MCF 10A (cell line): ENCODE measurements at regions of chr2 and their contacts with region 1.

Region 1: DNA sequence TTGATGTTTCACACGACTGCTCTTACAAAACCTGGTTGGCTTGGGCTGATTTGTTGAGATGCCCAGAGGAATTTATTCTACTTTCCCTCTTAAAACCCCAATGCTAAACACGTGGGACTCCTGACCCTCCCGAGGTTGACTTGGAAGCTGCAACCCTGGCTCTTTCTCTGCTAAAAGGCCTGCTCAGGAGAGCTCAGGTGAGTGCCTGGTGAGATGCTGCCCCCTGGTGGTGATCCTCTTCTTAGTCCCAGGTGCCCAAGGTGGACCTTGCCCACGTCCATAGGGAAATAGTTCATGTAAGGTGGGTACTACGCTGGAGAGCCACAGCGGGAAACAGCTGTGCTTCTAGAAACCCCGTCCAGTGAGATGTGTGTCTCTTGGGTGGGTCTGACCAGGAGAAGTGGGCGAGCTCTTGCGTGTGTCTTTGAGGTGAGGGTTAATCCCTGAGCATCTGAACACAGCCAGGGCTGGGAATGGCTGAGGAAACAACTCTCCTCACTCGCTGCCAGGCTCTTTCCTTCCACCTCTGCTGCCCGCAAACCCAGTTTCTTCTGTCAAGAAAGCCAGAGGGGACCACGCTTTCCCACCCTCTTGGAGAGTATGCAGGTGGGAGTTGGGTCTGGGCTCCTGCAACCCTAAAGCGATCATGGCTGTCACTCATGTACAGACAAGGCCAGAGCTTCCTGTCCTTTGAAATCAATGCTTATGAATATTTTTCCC is 25.5 kb upstream of the PXDN start:
- DNase-seq: peak; percentile 81
- H3K4me3 Mint-ChIP-seq: no peak overlapping the region
- H3K27ac Mint-ChIP-seq: no peak overlapping the region
- H3K4me1 Mint-ChIP-seq: no peaks in the 10 kb centered on the region
- H3K27me3 Mint-ChIP-seq: no peaks in the 10 kb centered on the region
- CTCF ChIP-seq: peak; percentile 93

Region 2: GRCh38 chr2:529425-529824 is 1240.4 kb before region 1 on chr2:
- CTCF ChIA-PET with region 1: interaction called, 3 read pairs
- POLR2A ChIA-PET with region 1: no interaction called
- intact Hi-C with region 1: loop called (anchors 10 kb)
- DNase-seq: peak; percentile 50
- H3K4me3 Mint-ChIP-seq: no peak overlapping the region
- H3K27ac Mint-ChIP-seq: no peak overlapping the region
- H3K4me1 Mint-ChIP-seq: peaks cover 3% of the 10 kb centered on the region
- H3K27me3 Mint-ChIP-seq: no peaks in the 10 kb centered on the region
- CTCF ChIP-seq: peak; percentile 50

Region 3: DNA sequence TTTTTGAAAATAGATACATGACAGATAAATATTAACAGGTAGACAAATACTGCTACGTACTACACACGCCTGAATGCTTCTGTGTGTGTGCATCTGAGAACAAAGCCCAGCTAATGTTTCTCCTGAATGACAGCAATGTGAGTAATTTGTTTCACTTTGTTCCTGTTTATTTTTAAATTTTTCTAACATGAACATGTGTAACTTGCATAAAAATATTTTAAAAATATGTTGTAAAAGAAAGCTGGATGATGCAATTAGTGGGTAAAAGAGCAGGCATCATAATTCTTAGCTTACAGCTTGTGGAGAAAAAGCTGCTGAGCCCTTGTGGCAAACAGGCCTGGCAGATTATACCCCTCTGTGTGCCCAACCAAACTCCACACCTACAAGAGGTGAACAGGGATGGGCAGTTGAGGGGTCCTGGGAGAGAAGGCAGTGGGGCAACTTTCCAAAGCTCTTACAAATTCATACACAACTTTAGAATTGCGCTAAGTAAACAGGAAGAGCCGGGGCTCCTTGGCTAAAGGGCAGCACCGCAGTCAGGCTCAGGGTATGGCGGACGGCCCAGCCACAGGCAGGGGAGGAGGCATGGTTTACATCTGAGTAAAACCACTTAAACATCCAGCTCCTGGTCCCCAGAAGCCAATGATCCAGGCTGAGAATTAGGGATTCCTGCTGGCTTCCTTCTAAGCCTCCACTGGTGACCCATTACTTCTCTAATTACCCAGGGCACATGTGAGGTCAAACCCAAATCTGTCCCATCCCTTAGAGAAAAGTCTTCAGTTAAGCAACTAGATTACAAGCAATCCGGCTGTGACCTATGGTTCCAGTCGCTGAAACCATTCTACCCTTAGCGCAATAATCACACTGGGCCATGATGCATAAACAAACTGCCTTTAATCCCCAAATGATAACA is 39.6 kb before region 1 on chr2:
- CTCF ChIA-PET with region 1: interaction called, 12 read pairs
- POLR2A ChIA-PET with region 1: no interaction called
- intact Hi-C with region 1: no loop called
- DNase-seq: peak; percentile 70
- H3K4me3 Mint-ChIP-seq: peak overlapping the region; percentile 53
- H3K27ac Mint-ChIP-seq: peak overlapping the region; percentile 99
- H3K4me1 Mint-ChIP-seq: peaks cover 32% of the 10 kb centered on the region
- H3K27me3 Mint-ChIP-seq: no peaks in the 10 kb centered on the region
- CTCF ChIP-seq: no peak

Region 4: DNA sequence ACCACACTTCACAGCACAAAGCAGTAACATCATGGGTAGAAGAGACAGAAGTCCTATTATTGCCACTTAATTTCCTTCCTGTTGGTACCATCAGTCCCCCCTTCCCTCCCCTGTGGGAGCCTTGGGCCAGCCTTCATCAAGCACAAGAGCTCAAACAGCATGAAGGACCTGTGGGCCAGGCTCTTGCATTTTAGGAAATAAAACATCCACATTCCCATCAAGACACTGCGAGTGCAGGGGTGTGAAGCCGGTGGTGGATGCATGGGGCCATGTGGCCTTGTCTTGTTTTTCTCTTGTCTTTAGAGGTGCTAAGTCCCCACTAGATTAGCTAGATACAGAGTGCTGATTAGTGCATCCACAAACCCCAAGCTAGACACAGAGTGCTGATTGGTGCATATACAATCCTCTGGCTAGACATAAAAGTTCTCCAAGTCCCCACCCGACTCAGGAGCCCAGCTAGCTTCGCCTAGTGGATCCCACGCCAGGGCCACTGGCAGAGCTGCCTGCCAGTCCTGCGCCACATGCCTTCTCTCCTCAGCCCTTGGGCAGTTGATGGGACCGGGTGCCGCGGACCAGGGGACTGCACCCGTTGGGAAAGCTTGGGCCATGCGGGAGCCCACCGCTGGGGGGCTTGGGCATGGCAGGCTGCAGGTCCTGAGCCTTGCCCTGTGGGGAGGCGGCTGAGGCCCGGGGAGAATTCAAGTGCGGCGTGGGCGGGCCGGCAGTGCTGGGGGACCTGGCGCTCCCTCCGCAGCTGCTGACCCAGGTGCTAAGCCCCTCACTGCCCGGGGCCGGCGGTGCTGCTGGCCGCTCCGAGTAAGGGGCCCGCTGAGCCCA is 10.9 kb before region 1 on chr2:
- CTCF ChIA-PET with region 1: interaction called, 63 read pairs
- POLR2A ChIA-PET with region 1: interaction called, 4 read pairs
- intact Hi-C with region 1: no loop called
- DNase-seq: no peak
- H3K4me3 Mint-ChIP-seq: no peak overlapping the region
- H3K27ac Mint-ChIP-seq: no peak overlapping the region
- H3K4me1 Mint-ChIP-seq: no peaks in the 10 kb centered on the region
- H3K27me3 Mint-ChIP-seq: peaks cover 28% of the 10 kb centered on the region
- CTCF ChIP-seq: no peak

Region 5: DNA sequence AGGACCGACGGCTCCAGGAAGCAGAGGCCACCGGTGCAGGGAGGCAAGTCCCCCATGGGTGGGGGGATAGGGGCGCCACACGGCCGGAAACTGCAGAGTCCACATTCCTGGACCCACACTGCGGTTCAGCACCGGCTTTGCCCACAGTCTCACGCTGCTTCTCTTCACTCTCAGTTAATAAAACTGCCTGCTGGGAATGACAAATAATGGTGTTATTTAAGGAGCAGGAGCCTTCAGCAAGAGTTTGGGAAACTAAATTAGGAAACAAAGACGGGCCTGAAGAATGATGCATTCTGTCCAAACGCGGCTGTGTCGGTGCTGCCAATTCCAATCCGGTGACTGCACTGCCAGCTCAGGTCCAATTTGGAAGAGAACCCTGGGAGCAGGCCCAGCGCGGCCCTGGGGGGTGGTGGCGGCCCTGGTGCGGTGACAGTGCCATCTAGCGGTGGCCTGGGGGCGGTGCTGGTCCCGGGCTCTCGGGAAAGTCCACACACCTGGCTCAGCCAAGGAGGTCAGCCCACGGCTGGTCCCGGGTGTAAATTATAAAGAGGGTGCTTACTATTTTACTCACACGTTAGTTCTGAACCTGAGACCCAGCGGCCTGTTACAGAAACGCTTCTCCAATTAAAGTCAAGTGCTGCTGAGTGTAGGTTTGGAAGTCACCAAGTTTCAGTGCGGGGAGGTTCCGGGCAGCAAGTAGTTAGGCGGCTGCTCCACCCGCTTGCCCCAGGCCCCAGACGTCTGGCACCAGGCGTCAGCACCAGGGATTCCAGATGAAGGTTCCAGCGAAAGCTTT is 47.6 kb after region 1 on chr2:
- CTCF ChIA-PET with region 1: interaction called, 24 read pairs
- POLR2A ChIA-PET with region 1: no interaction called
- intact Hi-C with region 1: loop called (anchors 5 kb)
- DNase-seq: peak; percentile 75
- H3K4me3 Mint-ChIP-seq: peak overlapping the region; percentile 8
- H3K27ac Mint-ChIP-seq: peak overlapping the region; percentile 73
- H3K4me1 Mint-ChIP-seq: peaks cover 6% of the 10 kb centered on the region
- H3K27me3 Mint-ChIP-seq: no peaks in the 10 kb centered on the region
- CTCF ChIP-seq: peak; percentile 97

Region 6: DNA sequence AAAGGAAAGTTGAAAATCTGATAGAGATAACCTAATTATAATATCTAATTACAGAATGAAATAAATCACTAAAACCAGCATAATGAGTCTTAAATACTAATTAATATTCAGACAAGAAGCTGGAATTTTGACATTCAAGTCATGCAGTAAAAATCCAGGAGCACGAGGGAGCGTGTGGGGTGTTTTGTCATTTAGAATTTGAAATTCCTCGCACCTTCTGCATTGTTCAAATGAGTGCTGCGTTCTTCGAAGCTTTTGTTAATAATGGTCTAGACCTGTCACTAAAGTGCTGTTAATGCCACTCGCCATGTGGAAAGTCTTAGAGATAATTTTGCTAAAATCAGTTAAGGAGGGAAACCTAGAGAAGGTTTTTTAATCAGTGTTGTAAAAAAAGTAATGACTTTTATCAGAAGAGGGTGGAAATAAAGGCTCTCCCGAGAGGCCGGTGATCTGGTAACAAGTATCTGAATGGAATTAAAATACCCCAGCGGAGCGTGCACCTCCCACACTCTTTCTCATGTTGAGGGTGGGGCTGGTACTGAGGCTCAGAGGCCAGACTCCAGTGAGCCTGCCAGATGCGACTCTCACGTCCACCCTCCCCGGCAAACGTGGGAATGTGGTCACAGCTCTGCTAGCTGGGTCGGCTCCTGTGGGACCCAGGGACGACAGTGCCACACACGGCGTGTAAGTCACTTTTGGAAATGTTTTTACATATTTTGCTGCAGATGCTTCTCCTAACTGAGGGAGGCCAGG is 630.6 kb after region 1 on chr2:
- CTCF ChIA-PET with region 1: no interaction called
- POLR2A ChIA-PET with region 1: no interaction called
- intact Hi-C with region 1: no loop called
- DNase-seq: no peak
- H3K4me3 Mint-ChIP-seq: no peak overlapping the region
- H3K27ac Mint-ChIP-seq: no peak overlapping the region
- H3K4me1 Mint-ChIP-seq: no peaks in the 10 kb centered on the region
- H3K27me3 Mint-ChIP-seq: no peaks in the 10 kb centered on the region
- CTCF ChIP-seq: no peak